GM10248 (cell line): ENCODE measurements at regions of chr2 and their contacts with region 1.

Region 1: DNA sequence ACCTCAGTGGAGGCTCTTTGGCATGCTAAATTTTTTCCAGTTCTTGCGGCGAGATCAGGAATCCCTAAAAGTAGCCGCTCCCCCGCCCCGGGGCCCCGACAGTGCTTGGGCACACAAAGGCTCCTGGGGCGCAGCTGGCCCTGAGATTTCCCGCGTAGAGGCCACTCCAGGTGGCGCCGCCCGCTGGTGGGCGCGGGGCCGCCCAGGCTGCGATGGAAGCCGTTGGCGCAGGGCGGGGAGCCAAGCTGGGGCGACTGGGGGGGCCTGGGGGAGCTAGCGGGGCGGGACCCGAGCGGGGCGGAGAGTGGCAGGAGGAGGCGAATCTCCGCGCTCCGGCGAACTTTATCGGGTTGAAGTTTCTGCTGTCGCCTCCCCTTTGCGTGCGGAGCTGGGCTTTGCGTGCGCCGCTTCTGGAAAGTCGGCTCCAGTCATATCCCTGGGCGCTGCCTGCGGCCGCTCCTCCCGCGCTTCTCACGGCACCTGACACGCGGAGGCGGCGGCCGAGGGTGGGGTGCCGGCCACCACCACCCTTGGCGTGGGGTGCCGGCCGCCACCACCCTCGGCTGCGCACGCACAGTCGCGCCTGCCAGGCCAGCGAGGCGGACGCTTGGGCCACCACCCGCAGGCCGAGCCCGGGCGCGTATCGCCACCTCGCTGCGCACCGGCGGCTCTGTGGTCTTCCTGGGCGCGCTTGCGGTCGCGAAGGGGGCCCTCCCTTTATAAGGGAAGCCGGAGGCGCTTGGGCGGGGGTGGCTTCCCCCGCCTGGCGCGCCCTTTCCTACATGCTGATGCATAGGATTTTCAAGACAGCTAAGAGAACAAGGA is 867 bp upstream of the CYP1B1 start:
- DNase-seq: peak; percentile 87
- CTCF ChIP-seq: peak; percentile 54

Region 2: DNA sequence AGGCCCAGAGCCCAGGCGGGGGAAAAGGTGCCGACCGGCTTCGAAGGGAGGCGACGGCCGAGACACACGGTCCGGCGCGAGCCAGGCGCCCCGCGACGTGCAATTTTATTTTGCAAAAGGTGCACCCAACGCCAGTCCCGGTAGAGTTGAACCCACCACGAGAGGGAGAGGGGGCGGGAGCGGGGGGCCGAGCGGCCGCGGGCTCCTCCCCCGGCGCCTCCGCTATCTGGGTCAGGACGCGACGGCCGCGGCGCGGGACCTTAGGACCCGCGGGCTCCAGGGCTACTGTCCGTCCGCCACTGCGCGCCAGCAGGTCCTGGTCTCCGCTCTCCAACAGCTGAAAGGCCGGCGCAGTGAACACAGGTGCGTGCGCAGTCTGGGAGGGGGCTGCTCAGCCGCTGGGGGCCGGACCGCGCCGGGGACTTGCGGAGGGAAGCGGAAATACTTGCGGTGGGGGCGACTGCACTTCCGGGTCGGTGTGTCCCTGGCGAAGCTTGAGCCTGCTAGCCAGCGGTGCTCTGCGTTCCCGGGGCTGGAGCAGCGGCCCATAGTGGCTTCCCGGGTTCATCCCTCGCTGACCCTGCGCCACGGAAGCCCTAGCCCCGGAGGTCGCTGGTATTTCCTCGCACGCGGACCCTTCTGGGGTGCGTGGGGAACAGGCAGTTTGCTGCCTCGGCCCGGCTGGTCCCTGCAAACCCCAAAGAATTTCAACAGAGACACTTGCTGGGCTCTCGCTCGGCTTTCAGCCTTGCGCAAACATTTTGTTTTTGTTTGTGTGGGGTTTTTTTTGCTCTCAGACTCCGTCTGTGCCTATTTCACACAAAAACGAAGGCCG is 151.5 kb before region 1 on chr2 and contains the start of gene RMDN2:
- CTCF ChIA-PET with region 1: interaction called, 11 read pairs
- POLR2A ChIA-PET with region 1: no interaction called
- DNase-seq: peak; percentile 89
- CTCF ChIP-seq: peak; percentile 8

Region 3: GRCh38 chr2:38057651-38058410 is 19.0 kb before region 1 on chr2:
- CTCF ChIA-PET with region 1: interaction called, 11 read pairs
- POLR2A ChIA-PET with region 1: no interaction called
- DNase-seq: no peak
- CTCF ChIP-seq: no peak

Region 4: DNA sequence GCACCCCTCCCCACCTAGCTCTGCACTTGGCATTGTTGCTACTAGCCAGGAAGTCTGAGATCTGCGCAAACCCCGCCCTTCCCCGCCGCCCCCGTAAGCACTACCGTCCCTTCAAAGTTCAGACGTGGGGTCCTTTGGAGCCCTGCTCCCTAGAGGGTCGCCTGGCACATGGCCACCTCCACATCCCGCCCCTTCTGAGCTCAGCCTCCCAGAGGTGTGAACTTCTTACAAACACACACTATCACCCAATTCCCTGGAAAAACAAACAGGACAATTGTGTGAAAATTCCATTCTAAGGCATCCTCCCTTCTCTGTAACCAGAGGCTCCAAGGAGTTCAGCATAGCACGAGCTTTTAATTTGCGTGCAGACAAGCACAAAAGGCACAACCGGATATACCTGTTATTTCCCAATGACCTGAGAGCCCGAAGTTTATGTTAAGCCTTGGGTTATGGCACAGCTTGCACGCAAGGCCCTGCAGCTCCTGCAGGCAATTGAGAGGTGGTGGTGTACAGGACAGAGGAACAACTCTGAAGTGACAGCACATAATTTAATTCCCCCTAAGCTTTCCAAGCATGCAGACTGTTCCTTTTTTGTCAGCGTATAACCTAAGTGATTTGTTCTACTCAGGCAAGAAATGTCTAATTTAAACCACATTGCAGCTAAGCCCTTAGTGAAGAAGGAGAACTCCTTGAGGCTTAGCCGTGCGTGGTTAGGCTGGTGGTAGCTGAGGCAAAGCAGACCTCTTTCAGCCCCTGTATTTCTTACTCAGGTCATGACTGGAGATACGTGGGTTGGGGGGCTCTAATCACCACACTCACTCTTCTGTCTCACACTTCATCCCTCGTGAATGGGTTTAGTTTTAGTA is 19.4 kb after region 1 on chr2:
- CTCF ChIA-PET with region 1: interaction called, 17 read pairs
- POLR2A ChIA-PET with region 1: interaction called, 4 read pairs
- DNase-seq: peak; percentile 45
- CTCF ChIP-seq: no peak

Region 5: DNA sequence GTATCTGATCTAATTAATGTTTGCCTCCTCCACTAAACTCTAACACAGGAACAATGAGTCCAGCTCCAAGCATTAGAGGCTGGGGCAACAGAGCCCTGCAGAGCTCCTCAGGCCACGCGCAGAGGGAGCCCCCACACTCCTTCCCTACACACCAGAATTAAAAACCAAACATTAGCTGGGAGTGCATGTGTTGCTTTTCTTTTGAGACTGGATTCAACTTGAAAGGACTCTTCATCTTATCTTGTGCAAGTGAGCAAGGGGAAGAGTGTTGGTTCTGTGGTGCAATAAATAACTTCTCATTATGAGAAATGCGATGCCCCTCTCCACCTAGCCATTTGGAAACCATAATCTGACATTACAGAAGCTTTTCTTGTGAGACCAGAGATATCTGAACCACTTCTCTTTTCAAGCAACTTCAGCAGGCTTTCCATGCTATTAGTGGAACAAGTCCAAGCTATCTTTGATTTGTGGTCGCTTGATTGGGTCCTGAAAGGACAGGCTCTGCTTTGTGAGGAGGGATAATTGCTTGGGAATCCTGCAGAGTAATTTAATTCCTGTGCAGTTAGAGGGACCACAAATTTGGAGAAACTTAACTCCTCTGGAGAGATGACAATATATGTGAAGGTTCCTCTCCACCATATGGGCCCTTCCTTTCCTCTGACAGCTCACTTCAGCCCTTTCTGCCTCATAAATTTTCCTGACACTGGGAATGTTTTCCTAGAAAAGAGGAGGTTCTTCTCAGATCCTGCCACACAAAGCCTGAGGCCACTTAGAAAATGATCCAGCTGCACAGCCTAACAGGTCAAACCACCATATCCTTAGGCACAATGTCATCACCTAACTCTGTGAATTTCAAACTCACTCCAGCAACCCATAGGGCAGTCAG is 187.8 kb after region 1 on chr2:
- CTCF ChIA-PET with region 1: interaction called, 12 read pairs
- POLR2A ChIA-PET with region 1: interaction called, 4 read pairs
- DNase-seq: no peak
- CTCF ChIP-seq: no peak